ENCODE measurements at regions of chr9 and their contacts with region 1.

Region 1: GRCh38 chr9:19174127-19174912 is 47.0 kb upstream of the PLIN2 start:
- DNase-seq: peak; percentile 85 to 89
- ATAC-seq: peak; percentile 88
- H3K4me3 ChIP-seq: no peak overlapping the region
- H3K27ac ChIP-seq: no peak overlapping the region
- H3K4me1 ChIP-seq: no peaks in the 10 kb centered on the region
- H3K27me3 ChIP-seq: no peaks in the 10 kb centered on the region

Region 2: GRCh38 chr9:19048966-19049916 is 125.1 kb before region 1 on chr9 and contains the start of gene RRAGA:
- intact Hi-C with region 1: loop called in 1 of 2 experiments (anchors 2 kb)
- DNase-seq: peak; percentile 96 to 98
- ATAC-seq: peak; percentile 98
- H3K4me3 ChIP-seq: peak within 1 kb of the TSS; percentile 41 to 94
- H3K27ac ChIP-seq: peak within 1 kb of the TSS; percentile 81 to 96
- H3K4me1 ChIP-seq: peaks cover 1 to 5% of the 10 kb centered on the region in 2 donors
- H3K27me3 ChIP-seq: no peaks in the 10 kb centered on the region
- total RNA-seq, gene RRAGA: 85.9 to 87.2 TPM

Region 3: DNA sequence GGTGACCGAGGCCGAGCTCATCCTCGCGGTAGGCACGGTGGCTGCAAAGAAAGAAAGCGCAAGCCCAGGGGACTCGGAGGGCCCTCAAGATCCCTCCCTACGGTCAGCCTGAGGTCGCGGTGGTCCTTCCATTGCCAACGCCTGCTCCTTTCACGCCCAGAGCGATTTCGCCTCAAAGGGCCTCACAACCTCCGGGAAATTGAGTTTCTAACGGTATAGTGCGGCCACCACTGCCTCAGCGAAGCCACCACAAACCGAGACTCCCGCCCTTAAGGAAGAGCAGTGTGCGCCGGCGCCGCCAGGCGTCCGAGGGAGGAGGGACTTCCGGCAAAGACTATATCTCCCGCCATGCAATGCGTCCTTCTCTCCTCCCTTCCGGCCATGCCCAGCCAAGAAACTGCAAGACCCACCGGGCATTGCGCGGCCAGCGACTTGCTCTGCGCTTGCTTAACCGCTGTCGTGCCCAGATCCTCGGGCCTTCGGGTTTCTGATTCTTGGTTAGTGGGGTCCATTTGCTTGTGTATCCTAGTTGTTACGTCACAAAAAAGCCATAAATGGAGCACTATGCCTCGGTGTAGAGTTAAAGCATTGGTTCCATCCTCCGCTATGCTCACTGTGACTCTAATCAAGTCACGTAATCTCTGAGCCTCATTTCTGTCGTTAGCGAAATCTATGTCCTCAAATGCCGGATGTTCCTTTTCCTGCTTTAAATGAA is 71.5 kb before region 1 on chr9 and contains the start of gene HAUS6:
- intact Hi-C with region 1: loop called in 1 of 2 experiments (anchors 10 kb)
- DNase-seq: peak; percentile 98 to 99
- ATAC-seq: peak; percentile 99
- H3K4me3 ChIP-seq: peak within 1 kb of the TSS; percentile 23 to 76
- H3K27ac ChIP-seq: peak within 1 kb of the TSS in 1 of 2 donors; percentile 66
- H3K4me1 ChIP-seq: no peaks in the 10 kb centered on the region
- H3K27me3 ChIP-seq: no peaks in the 10 kb centered on the region
- total RNA-seq, gene HAUS6: 8.4 to 9.2 TPM

Region 4: GRCh38 chr9:19116107-19116790 is 58.1 kb before region 1 on chr9:
- intact Hi-C with region 1: no loop called
- DNase-seq: no peak
- ATAC-seq: no peak
- H3K4me3 ChIP-seq: no peak overlapping the region
- H3K27ac ChIP-seq: no peak overlapping the region
- H3K4me1 ChIP-seq: no peaks in the 10 kb centered on the region
- H3K27me3 ChIP-seq: no peaks in the 10 kb centered on the region

Region 5: DNA sequence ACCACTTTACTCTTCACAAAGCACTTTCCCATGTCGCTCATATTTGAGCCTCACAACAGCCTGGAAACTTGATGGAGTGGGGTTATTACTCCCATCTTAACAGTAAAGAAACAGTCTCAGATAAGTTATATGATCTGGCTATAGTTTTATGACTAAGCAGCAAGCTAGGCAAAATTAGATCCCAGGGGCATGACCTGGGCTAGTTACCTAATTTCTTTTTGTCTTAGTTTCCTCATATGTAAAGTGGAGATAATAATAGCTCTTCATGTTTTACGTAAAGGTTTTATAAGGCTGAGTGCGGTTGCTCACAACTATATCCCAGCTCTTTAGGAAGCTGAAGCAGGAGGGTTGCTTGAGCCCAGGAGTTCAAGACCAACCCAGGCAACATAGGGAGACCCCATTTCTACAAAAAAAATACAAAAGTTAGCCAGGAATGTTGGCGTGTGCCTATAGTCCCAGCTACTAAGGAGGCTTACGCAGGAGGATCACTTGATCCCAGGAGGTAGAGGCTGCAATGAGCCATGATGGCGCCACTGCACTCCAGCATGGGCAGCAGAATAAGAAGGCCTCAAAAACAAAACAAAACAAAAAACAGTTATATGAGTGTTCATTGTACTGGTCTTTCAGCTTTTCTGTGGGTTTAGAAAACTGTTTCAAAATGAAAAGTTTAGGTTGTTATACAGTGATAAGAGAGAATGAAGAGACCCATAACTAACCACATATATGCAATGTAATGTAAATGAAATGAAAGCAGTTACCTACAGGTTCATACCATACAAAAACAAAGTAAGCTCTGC is 40.6 kb before region 1 on chr9:
- intact Hi-C with region 1: loop called in 1 of 2 experiments (anchors 5 kb)
- DNase-seq: no peak
- ATAC-seq: no peak
- H3K4me3 ChIP-seq: no peak overlapping the region
- H3K27ac ChIP-seq: no peak overlapping the region
- H3K4me1 ChIP-seq: no peaks in the 10 kb centered on the region
- H3K27me3 ChIP-seq: no peaks in the 10 kb centered on the region

Region 6: GRCh38 chr9:19201899-19202891 is 27.9 kb after region 1 on chr9:
- intact Hi-C with region 1: no loop called
- DNase-seq: no peak
- ATAC-seq: no peak
- H3K4me3 ChIP-seq: no peak overlapping the region
- H3K27ac ChIP-seq: no peak overlapping the region
- H3K4me1 ChIP-seq: no peaks in the 10 kb centered on the region
- H3K27me3 ChIP-seq: no peaks in the 10 kb centered on the region

Region 7: GRCh38 chr9:19223724-19224123 is 49.4 kb after region 1 on chr9:
- intact Hi-C with region 1: no loop called
- DNase-seq: no peak
- ATAC-seq: no peak
- H3K4me3 ChIP-seq: no peak overlapping the region
- H3K27ac ChIP-seq: no peak overlapping the region
- H3K4me1 ChIP-seq: no peaks in the 10 kb centered on the region
- H3K27me3 ChIP-seq: no peaks in the 10 kb centered on the region